Esophagus squamous epithelium (tissue), 5 donors: ENCODE measurements at regions of chr1 and their contacts with region 1.

Region 1: DNA sequence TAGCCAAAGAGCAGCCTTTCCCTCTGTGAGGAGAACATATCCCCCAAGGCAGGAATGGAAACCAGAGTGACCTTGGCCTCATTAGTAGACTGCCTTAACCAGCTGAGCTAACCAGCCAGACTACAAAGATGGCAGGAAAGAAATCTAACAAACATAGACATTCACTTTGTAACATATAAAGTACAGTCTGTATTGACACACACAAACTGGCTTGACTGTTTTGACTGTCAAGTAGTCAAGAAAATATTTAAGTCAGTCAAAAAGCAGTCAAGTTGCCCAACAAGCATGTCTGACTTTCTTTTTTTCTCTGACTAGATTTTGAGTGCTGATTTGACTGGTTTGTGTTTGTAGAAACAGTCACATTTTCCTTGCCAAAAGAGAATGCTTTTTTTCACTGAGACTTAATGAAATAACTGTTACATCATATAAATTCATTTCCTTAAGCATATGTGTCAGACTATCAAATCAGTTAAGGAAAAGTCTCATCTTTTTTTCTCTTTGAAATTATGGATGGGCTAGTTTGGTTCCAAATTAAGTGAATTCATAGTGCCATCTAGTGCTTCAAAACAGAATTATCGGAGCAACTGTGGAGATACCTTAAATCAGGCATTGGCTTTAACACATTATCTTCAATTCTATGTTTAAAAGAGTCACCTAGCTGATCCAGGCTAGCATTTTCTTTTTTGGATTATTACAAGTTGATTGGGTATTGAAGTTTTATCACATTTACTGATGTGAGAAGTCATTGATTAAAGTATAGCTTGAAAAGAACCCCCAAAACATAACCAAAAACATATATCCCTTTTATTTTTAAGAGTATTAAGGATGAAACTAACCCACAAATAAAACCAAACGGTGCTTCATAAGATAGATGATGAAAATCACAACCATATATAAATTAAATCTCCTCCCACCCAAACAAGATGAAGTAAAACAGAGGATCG is 75.0 kb downstream of the ATP6V1G3 start:
- DNase-seq: no peak
- H3K4me3 ChIP-seq: no peak overlapping the region
- H3K27ac ChIP-seq: no peak overlapping the region
- H3K4me1 ChIP-seq: peaks cover 0 to 14% (median 0%) of the 10 kb centered on the region in 3 donors
- H3K27me3 ChIP-seq: peaks cover 0 to 4% (median 0%) of the 10 kb centered on the region in 4 donors
- CTCF ChIP-seq: peak; percentile 27 to 79 (median 61)
- POLR2A ChIP-seq: no peak

Region 2: GRCh38 chr1:198056255-198056654 is 409.2 kb before region 1 on chr1:
- intact Hi-C with region 1: no loop called
- DNase-seq: no peak
- H3K4me3 ChIP-seq: no peak overlapping the region
- H3K27ac ChIP-seq: no peak overlapping the region
- H3K4me1 ChIP-seq: no peaks in the 10 kb centered on the region
- H3K27me3 ChIP-seq: no peaks in the 10 kb centered on the region
- CTCF ChIP-seq: no peak
- POLR2A ChIP-seq: no peak

Region 3: DNA sequence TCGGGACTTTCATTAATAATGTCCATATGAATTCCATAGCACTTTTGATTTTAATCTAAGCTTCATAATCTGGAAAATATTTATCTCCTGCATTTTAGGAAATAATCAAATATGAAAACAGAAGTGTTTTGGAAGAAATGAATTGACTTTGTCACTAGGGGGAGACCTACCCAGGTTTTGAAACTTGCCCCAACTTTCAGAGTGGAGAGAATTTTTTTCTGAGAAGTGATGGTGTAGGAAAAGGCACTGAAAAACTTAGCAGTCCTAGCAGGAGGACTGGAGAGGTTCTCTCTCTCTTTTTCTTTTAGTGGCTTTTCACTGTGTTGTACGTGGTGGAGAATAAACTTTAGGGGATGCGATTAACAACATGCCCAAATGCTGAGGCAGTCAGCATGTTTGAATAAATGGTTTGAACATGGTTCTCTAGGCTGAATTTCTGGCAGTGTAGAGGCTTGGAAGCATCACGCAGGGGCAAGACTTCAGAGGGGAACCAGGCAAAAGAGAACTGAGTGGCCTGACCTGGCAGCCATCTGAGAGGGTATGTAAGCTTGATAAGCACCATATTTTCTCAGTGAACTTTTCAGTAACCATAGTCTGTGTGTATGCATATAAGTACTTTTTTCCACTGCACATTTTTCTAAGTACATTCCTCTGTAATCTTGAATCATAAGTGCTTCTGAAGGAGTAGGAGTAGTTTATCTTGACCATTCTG is 377.0 kb before region 1 on chr1:
- intact Hi-C with region 1: loop called (anchors 10 kb)
- DNase-seq: no peak
- H3K4me3 ChIP-seq: no peak overlapping the region
- H3K27ac ChIP-seq: no peak overlapping the region
- H3K4me1 ChIP-seq: no peaks in the 10 kb centered on the region
- H3K27me3 ChIP-seq: no peaks in the 10 kb centered on the region
- CTCF ChIP-seq: peak; percentile 26 to 54 (median 43)
- POLR2A ChIP-seq: no peak

Region 4: DNA sequence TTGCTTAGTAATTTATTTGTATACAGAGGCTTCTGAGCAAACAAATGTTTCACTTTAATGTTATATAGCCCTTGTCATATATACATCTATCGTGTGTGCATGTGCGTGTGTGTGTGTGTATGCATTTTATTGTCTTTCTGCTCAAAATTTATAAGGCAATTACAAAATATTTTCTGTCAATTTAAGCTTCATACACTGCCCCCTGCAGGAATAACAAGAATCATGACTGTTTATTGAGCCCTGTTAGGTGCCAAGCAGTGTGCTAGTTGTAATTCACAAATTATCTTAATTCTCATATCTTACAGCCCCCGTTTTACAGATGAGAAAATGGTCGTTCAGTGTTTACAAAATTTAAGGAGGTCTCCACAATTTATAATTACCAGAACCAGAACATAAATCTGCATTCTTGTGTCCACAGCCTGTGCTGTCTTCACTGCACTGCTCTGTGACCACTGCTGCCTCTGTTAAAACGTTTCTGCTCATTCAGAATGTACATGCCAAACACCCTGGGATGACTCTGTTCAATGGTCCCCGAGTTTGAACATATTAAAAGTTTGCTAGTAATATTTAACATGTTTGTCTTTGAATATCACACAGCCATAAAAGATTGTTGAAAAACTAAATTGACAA is 106.3 kb before region 1 on chr1:
- intact Hi-C with region 1: no loop called
- DNase-seq: no peak
- H3K4me3 ChIP-seq: no peak overlapping the region
- H3K27ac ChIP-seq: no peak overlapping the region
- H3K4me1 ChIP-seq: no peaks in the 10 kb centered on the region
- H3K27me3 ChIP-seq: no peaks in the 10 kb centered on the region
- CTCF ChIP-seq: peak; percentile 19 to 61 (median 24)
- POLR2A ChIP-seq: no peak